ENCODE measurements at regions of chr7 and their contacts with region 1.

Region 1: GRCh38 chr7:31633894-31634494 is 53.0 kb upstream of the PPP1R17 start:
- DNase-seq: peak; percentile 86
- H3K4me3 ChIP-seq: no peak overlapping the region
- H3K27ac ChIP-seq: peak overlapping the region; percentile 34
- H3K4me1 ChIP-seq: peaks cover 13% of the 10 kb centered on the region
- H3K27me3 ChIP-seq: no peaks in the 10 kb centered on the region
- CTCF ChIP-seq: peak; percentile 83

Region 2: DNA sequence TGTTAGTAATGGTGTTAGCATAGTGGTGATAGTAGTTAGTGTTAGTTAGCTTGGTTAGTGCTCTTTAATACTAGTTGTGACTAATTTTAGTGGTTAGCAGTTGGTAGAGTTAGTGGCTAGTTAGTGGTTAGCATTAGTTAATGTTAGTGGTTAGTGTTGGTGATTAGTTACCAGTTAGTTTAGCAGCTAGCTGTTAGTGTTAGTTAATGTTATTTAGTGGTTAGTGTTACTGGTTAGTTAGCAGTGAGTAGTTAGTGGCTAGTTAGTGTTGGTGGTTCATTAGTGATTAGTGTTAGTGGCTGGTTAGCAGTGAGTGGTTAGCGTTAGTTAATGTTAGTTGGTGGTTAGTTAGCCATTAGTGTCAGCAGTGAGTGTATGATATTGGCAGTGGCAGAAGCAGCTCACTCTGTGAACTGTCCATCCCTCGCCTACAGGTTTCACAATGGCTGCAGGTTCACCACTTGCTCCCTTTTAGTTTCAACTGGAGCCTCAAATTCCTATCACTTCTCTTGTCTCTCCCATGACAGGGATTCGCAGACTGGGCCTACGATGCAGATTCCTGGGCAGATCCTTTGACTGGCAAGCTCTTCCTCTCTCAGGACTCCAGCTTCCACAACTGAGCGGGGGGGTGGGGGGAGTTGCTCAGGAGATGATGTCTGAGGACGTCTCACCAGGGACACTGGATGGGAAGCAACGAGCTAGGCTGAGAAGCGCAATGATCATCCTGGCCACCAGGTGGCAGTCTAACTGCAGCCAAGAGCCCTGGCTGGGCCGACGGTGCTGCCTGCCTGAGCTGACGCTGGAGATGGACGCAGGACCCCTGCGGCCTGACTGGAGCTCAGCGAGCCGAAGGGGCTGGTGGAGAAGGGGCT is 650.7 kb before region 1 on chr7:
- CTCF ChIA-PET with region 1: no interaction called
- POLR2A ChIA-PET with region 1: no interaction called
- intact Hi-C with region 1: loop called (anchors 5 kb)
- DNase-seq: peak; percentile 85
- H3K4me3 ChIP-seq: no peak overlapping the region
- H3K27ac ChIP-seq: no peak overlapping the region
- H3K4me1 ChIP-seq: no peaks in the 10 kb centered on the region
- H3K27me3 ChIP-seq: no peaks in the 10 kb centered on the region
- CTCF ChIP-seq: peak; percentile 93

Region 3: GRCh38 chr7:31145339-31145738 is 488.7 kb before region 1 on chr7:
- CTCF ChIA-PET with region 1: interaction called, 3 read pairs
- POLR2A ChIA-PET with region 1: no interaction called
- intact Hi-C with region 1: loop called (anchors 5 kb)
- DNase-seq: peak; percentile 68
- H3K4me3 ChIP-seq: no peak overlapping the region
- H3K27ac ChIP-seq: no peak overlapping the region
- H3K4me1 ChIP-seq: no peaks in the 10 kb centered on the region
- H3K27me3 ChIP-seq: no peaks in the 10 kb centered on the region
- CTCF ChIP-seq: peak; percentile 61

Region 4: DNA sequence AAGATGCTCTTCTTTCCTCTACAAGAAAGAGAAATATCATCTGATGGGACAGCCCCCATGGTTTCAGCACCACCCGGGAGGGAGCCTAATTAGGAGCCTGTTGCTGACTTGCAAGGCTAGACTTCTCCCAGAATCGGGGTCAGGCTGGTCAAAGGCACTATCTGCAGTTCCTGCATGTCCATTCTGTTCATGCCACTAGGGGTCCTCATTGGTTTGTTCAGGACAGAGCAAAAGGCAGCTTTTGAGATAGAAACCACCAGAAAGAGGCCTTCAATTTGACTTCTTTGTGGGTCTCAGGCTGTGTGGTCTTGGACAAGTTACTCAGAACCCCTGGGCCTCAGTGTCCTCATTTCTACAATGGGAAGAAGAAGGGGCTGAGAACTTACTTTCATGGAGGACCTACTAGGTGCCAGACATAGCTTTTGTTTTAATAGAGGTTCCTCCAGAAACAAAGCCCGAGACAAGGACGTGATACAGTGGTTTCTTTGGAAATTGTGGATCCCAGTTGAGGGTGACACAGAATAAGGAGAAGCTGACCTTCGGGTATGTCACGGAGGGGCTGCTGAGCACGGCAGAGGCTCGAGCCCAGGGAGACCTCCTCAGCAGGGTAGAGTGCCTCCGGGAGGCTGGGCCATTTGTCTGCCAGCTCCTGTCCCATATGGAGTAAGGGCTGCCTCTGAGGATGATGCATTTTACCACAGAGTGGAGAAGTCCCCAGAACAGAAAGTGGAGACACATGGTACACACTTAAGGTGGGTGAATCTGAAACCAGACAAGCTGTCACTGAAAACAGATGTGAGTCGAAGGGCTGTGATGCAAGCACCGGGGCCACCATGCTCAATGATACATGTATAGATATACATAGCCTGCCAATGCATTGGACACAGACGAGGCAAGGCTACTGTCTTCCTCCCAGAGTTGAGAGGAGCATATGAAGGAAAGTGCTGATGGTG is 260.4 kb before region 1 on chr7:
- CTCF ChIA-PET with region 1: interaction called, 8 read pairs
- POLR2A ChIA-PET with region 1: no interaction called
- intact Hi-C with region 1: loop called (anchors 1 kb)
- DNase-seq: peak; percentile 85
- H3K4me3 ChIP-seq: no peak overlapping the region
- H3K27ac ChIP-seq: peak overlapping the region; percentile 10
- H3K4me1 ChIP-seq: peaks cover 9% of the 10 kb centered on the region
- H3K27me3 ChIP-seq: no peaks in the 10 kb centered on the region
- CTCF ChIP-seq: peak; percentile 85

Region 5: DNA sequence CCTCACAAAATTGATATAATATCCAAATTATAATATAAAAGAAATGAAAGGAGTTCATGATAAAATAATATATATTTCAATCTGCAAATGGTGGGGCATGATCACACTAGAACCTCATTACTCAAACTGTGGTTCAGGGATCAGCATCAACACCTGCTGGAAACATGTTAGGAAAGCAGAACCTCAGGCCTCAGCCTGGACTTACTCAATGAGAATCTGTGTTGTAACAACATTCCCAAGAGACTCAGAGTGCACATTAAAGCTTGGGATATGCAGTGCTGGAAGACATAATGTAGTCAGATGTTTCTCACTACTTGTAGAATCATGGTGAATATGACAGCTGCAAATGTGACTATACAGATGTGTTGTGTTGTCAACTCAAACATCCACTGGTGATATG is 201.8 kb before region 1 on chr7:
- CTCF ChIA-PET with region 1: no interaction called
- POLR2A ChIA-PET with region 1: no interaction called
- intact Hi-C with region 1: no loop called
- DNase-seq: peak; percentile 67
- H3K4me3 ChIP-seq: no peak overlapping the region
- H3K27ac ChIP-seq: no peak overlapping the region
- H3K4me1 ChIP-seq: no peaks in the 10 kb centered on the region
- H3K27me3 ChIP-seq: no peaks in the 10 kb centered on the region
- CTCF ChIP-seq: no peak

Region 6: GRCh38 chr7:31456646-31457368 is 177.2 kb before region 1 on chr7:
- CTCF ChIA-PET with region 1: no interaction called
- POLR2A ChIA-PET with region 1: no interaction called
- intact Hi-C with region 1: no loop called
- DNase-seq: no peak
- H3K4me3 ChIP-seq: no peak overlapping the region
- H3K27ac ChIP-seq: no peak overlapping the region
- H3K4me1 ChIP-seq: no peaks in the 10 kb centered on the region
- H3K27me3 ChIP-seq: no peaks in the 10 kb centered on the region
- CTCF ChIP-seq: no peak

Region 7: GRCh38 chr7:31521336-31522010 is 112.5 kb before region 1 on chr7:
- CTCF ChIA-PET with region 1: no interaction called
- POLR2A ChIA-PET with region 1: no interaction called
- intact Hi-C with region 1: loop called (anchors 5 kb)
- DNase-seq: peak; percentile 91
- H3K4me3 ChIP-seq: no peak overlapping the region
- H3K27ac ChIP-seq: peak overlapping the region; percentile 91
- H3K4me1 ChIP-seq: peaks cover 28% of the 10 kb centered on the region
- H3K27me3 ChIP-seq: no peaks in the 10 kb centered on the region
- CTCF ChIP-seq: no peak

Measured in A673 (cell line).